Activated naive CD4-positive, alpha-beta T cell treated with anti-CD3 and anti-CD28 coated beads for 36 hours (primary cell): ENCODE measurements at regions of chr14 and their contacts with region 1.

Region 1: GRCh38 chr14:61188978-61189808 is 91.9 kb downstream of the TMEM30B start:
- DNase-seq: peak; percentile 76
- H3K4me3 Mint-ChIP-seq: peak overlapping the region; percentile 70
- H3K27ac Mint-ChIP-seq: peak overlapping the region; percentile 53
- H3K4me1 Mint-ChIP-seq: peaks cover 15% of the 10 kb centered on the region
- H3K27me3 Mint-ChIP-seq: peaks cover 36% of the 10 kb centered on the region

Region 2: GRCh38 chr14:60628892-60629291 is 560.3 kb before region 1 on chr14:
- CTCF ChIA-PET with region 1: no interaction called
- intact Hi-C with region 1: loop called (anchors 5 kb)
- DNase-seq: no peak
- H3K4me3 Mint-ChIP-seq: no peak overlapping the region
- H3K27ac Mint-ChIP-seq: no peak overlapping the region
- H3K4me1 Mint-ChIP-seq: peaks cover 3% of the 10 kb centered on the region
- H3K27me3 Mint-ChIP-seq: peaks cover 17% of the 10 kb centered on the region

Region 3: GRCh38 chr14:60656686-60657455 is 532.3 kb before region 1 on chr14:
- CTCF ChIA-PET with region 1: no interaction called
- intact Hi-C with region 1: loop called (anchors 2 kb)
- DNase-seq: peak; percentile 39
- H3K4me3 Mint-ChIP-seq: peak overlapping the region; percentile 75
- H3K27ac Mint-ChIP-seq: no peak overlapping the region
- H3K4me1 Mint-ChIP-seq: peaks cover 39% of the 10 kb centered on the region
- H3K27me3 Mint-ChIP-seq: peaks cover 79% of the 10 kb centered on the region

Region 4: DNA sequence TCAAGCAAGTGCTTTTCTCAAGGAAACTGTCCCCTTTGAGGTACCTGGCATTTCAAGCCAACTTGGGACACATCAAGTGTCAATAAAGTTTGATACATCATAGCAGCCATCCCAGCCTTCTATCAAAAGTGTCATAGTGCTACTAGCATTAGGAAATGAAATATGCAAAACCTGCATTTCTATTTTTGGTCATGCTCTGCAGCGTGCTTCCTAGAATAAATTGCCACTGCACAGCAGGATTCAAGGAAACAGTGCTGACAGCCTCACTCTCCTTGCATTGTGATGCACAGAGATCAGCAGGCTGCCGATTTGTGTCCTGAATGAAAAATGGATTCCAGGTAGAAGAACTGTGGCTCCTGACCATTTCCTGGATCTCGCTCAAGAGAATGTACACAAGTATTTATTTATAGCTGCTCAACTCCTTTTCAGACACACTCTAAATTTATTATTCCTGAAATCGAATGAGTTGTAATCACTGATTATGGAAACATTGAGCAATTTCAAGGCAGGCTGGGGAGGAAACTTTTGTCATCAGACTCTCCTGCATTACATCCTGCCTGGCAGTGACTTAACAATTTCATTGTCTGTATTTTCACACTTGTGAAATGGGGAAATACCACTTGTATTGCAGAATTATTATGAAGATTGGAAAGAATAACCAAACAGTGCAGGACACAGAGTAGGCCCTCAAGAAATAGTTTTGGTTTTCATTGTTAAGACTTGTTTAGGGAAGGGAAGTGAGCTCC is 87.2 kb before region 1 on chr14:
- CTCF ChIA-PET with region 1: no interaction called
- intact Hi-C with region 1: loop called (anchors 1 kb)
- DNase-seq: peak; percentile 34
- H3K4me3 Mint-ChIP-seq: no peak overlapping the region
- H3K27ac Mint-ChIP-seq: peak overlapping the region; percentile 58
- H3K4me1 Mint-ChIP-seq: peaks cover 31% of the 10 kb centered on the region
- H3K27me3 Mint-ChIP-seq: no peaks in the 10 kb centered on the region

Region 5: DNA sequence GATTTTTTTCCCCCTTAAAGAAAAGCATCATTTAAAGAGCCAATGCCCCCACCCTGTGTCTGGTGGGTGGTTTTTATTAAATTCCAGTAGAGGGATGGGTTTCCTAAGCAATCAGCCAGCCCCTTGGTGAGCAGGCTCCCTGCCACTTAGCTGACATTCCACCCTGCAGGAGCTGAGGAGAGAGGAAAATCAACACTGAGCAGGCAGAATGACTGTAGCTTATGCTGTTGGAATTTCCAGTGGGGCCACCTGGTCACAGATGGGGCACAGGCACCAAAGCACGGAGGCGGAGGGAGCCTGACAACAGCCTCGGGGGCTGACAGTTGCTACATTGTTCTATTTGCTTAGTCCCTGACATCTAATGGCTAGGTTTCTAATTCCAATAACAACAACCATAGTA is 35.8 kb before region 1 on chr14:
- CTCF ChIA-PET with region 1: no interaction called
- intact Hi-C with region 1: no loop called
- DNase-seq: no peak
- H3K4me3 Mint-ChIP-seq: no peak overlapping the region
- H3K27ac Mint-ChIP-seq: no peak overlapping the region
- H3K4me1 Mint-ChIP-seq: no peaks in the 10 kb centered on the region
- H3K27me3 Mint-ChIP-seq: peaks cover 6% of the 10 kb centered on the region

Region 6: DNA sequence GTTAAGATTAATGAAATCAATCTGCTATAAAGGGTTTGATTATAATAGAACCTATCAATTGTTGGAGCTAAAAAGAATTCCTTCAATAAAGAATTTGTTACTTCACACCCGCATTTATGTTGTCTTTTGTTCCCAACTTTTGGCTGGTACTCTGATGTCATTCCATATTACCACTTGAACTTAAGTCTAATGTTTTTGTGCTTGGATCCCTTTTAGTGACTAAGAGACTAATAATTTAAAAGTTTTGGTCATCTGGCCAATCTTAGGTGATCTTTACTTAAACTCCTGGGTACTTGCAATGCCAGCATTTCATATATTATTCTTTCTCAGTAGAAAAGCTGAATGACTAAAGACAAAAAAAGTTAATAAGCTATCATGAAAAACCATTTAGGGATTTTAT is 21.1 kb before region 1 on chr14:
- CTCF ChIA-PET with region 1: no interaction called
- intact Hi-C with region 1: no loop called
- DNase-seq: no peak
- H3K4me3 Mint-ChIP-seq: no peak overlapping the region
- H3K27ac Mint-ChIP-seq: no peak overlapping the region
- H3K4me1 Mint-ChIP-seq: no peaks in the 10 kb centered on the region
- H3K27me3 Mint-ChIP-seq: peaks cover 6% of the 10 kb centered on the region